ENCODE measurements at regions of chr1 and their contacts with region 1.

Region 1: GRCh38 chr1:34852677-34853217 is 6.8 kb downstream of the SMIM12 start:
- DNase-seq: peak; percentile 88
- H3K4me3 Mint-ChIP-seq: no peak overlapping the region
- H3K27ac Mint-ChIP-seq: no peak overlapping the region
- H3K4me1 Mint-ChIP-seq: peaks cover 11% of the 10 kb centered on the region
- H3K27me3 Mint-ChIP-seq: no peaks in the 10 kb centered on the region

Region 2: DNA sequence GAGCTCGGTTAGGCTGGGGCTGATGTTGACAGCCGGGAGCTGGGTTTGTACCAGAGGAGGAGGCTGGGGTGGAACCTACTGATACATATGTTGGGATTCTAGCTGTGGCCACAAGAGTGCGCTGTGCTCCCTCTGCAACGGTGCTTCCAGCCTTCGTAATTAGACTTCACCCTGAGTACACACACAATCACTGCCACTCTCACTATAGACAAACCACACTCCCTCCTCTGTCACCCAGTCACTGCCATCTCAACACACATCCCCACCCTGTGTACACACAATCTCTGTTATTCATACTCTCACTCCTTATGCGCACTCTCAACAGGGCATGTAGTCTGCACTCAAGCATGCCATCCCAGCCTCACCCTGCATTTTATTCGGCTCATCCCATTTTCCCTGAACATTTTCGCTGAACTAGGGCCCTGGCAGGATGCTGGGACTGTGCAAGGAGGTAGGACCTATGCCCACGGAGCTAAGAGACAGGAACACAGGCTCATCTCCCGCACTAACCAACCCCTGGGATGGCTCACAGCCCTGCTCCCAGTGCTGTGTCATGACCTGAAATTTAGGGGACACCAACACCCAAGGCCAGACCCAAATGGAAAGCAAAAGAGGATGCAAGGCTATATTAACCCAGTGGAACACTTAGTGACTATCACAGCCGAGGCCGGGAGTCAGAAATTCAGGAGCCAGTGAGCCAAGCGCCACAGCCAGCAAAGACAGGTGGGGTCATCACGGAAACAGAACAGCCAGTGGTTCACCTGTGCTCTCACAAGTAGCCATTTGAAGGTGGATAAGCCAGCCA is 66.0 kb before region 1 on chr1:
- intact Hi-C with region 1: loop called (anchors 1 kb)
- DNase-seq: peak; percentile 45
- H3K4me3 Mint-ChIP-seq: no peak overlapping the region
- H3K27ac Mint-ChIP-seq: no peak overlapping the region
- H3K4me1 Mint-ChIP-seq: peaks cover 8% of the 10 kb centered on the region
- H3K27me3 Mint-ChIP-seq: peaks cover 24% of the 10 kb centered on the region

Region 3: DNA sequence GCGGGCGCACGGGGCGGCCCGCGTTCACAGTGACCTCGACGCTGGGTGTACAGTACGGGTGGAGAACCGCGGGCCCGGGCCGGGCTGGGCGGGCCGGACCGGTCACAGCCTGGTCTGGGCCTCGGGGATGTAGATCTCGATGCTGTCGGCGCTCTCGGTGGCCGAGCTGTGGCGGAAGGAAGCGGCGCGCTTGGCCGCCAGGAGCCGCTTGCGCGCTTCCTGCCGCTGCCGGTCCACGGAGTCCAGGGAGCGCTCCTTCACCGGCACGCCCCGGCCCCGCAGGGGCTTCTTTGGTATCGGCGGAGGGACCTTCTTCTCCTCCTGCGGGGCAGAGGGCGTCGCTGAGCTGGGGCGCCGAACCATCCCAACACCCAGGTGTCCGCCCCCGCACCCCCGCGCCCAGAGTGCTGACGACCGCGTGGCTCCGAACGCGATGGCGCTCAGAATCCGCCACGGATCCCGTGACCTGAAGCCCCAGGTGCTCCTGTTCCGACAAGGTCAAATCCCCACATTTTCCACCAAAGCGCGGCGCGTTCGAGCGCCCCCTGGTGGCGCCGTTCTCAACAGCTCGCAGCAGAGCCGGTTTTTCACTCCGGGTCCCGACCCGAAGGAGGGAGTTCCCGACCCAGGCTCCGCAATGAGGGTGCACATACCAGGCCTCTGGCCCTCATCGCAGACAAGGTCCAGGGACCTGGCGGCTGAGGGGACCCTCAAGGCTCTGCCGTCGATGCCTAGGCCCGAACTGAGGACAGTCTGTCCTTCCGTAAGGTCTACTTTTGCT is 13.4 kb after region 1 on chr1:
- intact Hi-C with region 1: loop called (anchors 1 kb)
- DNase-seq: peak; percentile 84
- H3K4me3 Mint-ChIP-seq: peak overlapping the region; percentile 76
- H3K27ac Mint-ChIP-seq: peak overlapping the region; percentile 86
- H3K4me1 Mint-ChIP-seq: peaks cover 22% of the 10 kb centered on the region
- H3K27me3 Mint-ChIP-seq: peaks cover 10% of the 10 kb centered on the region

Region 4: DNA sequence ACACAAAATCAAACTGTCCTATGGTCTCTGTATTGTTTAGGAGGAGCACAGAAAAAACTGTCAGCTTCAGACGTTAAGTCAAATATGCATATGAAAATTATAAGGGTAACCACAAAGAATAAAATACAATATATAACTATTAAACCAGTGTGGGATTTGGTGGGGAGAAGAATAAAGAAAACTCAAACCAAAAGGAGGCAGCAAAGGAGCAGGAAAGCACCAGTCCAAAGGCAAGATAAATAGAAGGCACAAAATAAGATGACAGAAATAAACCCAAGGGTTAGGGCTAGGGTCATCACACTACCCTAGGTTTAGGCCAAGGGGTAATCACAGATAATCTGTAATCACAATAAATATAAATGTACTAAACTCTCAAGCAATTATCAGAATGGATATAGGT is 43.9 kb after region 1 on chr1:
- intact Hi-C with region 1: no loop called
- DNase-seq: no peak
- H3K4me3 Mint-ChIP-seq: no peak overlapping the region
- H3K27ac Mint-ChIP-seq: no peak overlapping the region
- H3K4me1 Mint-ChIP-seq: no peaks in the 10 kb centered on the region
- H3K27me3 Mint-ChIP-seq: peaks cover 17% of the 10 kb centered on the region

Region 5: DNA sequence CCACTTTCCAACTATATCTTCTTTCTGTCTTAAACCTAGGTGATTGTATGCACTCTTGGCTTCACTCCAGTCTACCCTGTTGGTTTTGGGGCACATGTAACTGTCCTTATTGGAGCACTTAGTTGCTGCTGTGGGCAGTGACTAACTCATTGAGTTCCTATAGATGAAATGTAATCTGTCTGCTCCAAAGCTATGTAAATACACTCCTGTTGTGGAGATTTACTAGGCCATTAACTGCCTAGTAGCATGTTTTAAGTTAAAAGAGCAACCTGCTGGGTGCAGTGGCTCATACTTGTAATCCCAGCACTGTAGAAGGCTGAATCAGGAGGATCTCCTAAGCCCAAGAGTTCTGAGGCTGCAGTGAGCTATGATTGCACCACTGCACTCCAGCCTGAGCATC is 553.4 kb after region 1 on chr1:
- intact Hi-C with region 1: no loop called
- DNase-seq: no peak
- H3K4me3 Mint-ChIP-seq: no peak overlapping the region
- H3K27ac Mint-ChIP-seq: no peak overlapping the region
- H3K4me1 Mint-ChIP-seq: no peaks in the 10 kb centered on the region
- H3K27me3 Mint-ChIP-seq: no peaks in the 10 kb centered on the region

Measured in activated T-helper 2 cell treated with anti-CD3 and anti-CD28 coated beads, Interferon-gamma antibody, Interleukin-2, Interleukin-4, amounts not matched to agents 10 μg/mL and 5 μg/mL and 100 μg/mL, durations not matched to agents 14 hours and 24 hours and 36 hours (primary cell).